Caco-2 (cell line): ENCODE measurements at regions of chr3 and their contacts with region 1.

Region 1: DNA sequence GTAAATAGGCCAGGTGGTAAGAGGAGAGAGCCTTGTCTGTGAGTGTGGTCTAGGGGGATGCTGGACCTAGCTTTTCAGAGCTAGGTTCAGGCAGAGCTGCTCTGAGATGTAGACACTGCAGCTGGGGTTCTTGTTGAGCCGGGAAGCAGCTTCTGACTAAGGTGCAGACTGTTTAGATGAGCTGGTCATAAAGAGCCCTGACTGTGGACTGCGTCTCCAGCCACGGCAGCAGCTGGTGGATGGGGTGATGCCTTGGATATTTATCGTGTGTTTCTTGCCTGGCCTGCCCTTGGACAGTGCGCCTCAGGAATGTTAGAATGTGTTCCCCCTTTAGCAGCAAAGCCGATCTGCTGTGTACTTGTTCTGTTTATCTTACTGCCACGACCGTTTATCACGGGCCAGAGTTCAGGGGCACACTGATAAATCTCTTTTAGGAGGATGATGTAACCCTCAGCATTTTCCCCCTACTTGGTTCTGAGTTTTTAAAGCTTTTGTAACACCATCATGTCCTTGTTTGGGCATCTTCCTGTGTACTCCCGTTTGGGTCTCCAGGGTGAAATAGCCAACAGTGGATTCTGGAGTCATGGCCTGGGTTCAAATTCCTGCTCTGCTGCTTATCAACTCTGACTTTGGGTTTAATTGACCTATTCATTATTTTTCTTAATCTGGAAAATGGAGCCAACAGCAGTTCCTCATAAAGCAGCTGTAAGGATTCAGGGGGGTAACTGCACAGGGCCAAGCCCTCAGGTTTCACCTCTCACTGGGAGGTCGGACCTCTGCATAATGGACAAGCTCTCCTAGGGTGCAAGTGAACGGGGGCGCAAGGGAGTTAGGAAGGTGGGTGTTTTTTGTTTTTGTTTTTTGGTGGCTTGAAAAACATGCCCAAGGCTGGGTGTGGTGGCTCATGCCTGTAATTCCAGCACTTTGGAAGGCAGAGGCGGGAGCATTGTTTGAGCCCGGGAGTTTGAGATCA is 51.4 kb downstream of the FLNB start:
- DNase-seq: peak; percentile 86 to 94
- H3K4me3 ChIP-seq: no peak overlapping the region
- H3K4me3 Mint-ChIP-seq: peak overlapping the region; percentile 62
- H3K27ac Mint-ChIP-seq: peak overlapping the region; percentile 98
- H3K4me1 ChIP-seq: peaks cover 78% of the 10 kb centered on the region
- H3K4me1 Mint-ChIP-seq: peaks cover 36% of the 10 kb centered on the region
- H3K27me3 ChIP-seq: no peaks in the 10 kb centered on the region
- H3K27me3 Mint-ChIP-seq: no peaks in the 10 kb centered on the region
- CTCF ChIP-seq: no peak

Region 2: DNA sequence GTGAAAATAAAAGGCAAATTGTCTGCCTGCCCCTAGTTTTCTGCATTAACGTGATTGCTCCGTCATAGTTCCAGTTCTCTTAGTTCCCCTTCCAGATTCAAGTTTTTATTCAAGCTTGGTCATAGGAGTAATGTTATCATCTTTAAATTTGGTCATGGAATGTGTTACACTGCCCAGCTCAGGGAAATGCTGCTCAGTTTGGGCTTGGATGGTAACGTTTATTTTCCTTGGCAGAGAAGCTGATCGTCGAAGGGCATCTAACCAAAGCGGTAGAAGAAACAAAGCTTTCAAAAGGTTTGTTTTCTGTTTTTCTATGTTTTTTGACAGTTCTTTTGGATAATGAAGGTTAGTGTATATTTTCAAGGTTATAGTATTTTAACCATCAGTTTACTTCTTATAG is 169.8 kb before region 1 on chr3:
- CTCF ChIA-PET with region 1: no interaction called
- POLR2A ChIA-PET with region 1: no interaction called
- intact Hi-C with region 1: no loop called
- DNase-seq: no peak
- H3K4me3 ChIP-seq: no peak overlapping the region
- H3K4me3 Mint-ChIP-seq: no peak overlapping the region
- H3K27ac Mint-ChIP-seq: no peak overlapping the region
- H3K4me1 ChIP-seq: no peaks in the 10 kb centered on the region
- H3K4me1 Mint-ChIP-seq: no peaks in the 10 kb centered on the region
- H3K27me3 ChIP-seq: no peaks in the 10 kb centered on the region
- H3K27me3 Mint-ChIP-seq: no peaks in the 10 kb centered on the region
- CTCF ChIP-seq: no peak

Region 3: GRCh38 chr3:58008140-58009025 is 51.3 kb before region 1 on chr3 and contains the start of gene FLNB:
- CTCF ChIA-PET with region 1: interaction called, 5 read pairs
- POLR2A ChIA-PET with region 1: no interaction called
- intact Hi-C with region 1: loop called (anchors 2 kb)
- DNase-seq: peak; percentile 77 to 85
- H3K4me3 ChIP-seq: peak within 1 kb of the TSS; percentile 100
- H3K4me3 Mint-ChIP-seq: peak within 1 kb of the TSS; percentile 90
- H3K27ac Mint-ChIP-seq: peak within 1 kb of the TSS; percentile 63
- H3K4me1 ChIP-seq: peaks cover 60% of the 10 kb centered on the region
- H3K4me1 Mint-ChIP-seq: peaks cover 23% of the 10 kb centered on the region
- H3K27me3 ChIP-seq: no peaks in the 10 kb centered on the region
- H3K27me3 Mint-ChIP-seq: no peaks in the 10 kb centered on the region
- CTCF ChIP-seq: peak; percentile 74 to 88
- total RNA-seq, gene FLNB: 315 and 331 TPM in 2 replicates

Region 4: DNA sequence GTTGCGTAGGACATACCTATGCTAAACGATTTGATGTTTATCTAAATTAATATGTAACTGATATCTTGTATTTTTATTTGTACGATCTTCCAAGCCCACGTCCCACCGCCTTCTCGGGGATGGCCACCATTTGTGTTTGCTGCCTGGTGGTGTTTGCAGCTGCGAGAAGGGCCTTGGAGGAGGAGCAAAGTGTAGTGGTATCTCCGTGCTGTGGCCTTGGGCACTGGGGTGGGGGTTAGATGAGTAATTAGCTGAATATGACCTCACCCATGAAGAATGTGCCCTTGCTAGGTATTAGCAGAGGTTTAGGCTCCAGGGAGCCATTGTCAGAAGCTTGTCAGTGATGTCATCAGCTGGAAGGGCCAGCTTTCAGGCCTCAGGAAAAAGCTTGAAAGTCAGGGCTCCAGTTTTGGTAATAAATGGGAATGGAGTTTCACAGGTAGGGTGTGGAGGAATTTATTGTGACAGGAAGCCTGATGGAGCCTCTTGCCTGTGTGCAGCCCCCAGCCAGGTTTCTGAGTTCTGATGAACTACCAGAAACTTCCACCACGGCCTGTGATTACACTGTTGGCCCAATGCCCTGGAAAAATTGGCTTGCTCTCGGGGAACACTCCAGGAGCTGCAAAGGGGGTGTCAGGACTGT is 10.4 kb before region 1 on chr3:
- CTCF ChIA-PET with region 1: no interaction called
- POLR2A ChIA-PET with region 1: interaction called, 17 read pairs
- intact Hi-C with region 1: loop called (anchors 1 kb)
- DNase-seq: peak; percentile 92 to 94
- H3K4me3 ChIP-seq: no peak overlapping the region
- H3K4me3 Mint-ChIP-seq: peak overlapping the region; percentile 59
- H3K27ac Mint-ChIP-seq: peak overlapping the region; percentile 98
- H3K4me1 ChIP-seq: peaks cover 78% of the 10 kb centered on the region
- H3K4me1 Mint-ChIP-seq: peaks cover 47% of the 10 kb centered on the region
- H3K27me3 ChIP-seq: no peaks in the 10 kb centered on the region
- H3K27me3 Mint-ChIP-seq: no peaks in the 10 kb centered on the region
- CTCF ChIP-seq: no peak

Region 5: DNA sequence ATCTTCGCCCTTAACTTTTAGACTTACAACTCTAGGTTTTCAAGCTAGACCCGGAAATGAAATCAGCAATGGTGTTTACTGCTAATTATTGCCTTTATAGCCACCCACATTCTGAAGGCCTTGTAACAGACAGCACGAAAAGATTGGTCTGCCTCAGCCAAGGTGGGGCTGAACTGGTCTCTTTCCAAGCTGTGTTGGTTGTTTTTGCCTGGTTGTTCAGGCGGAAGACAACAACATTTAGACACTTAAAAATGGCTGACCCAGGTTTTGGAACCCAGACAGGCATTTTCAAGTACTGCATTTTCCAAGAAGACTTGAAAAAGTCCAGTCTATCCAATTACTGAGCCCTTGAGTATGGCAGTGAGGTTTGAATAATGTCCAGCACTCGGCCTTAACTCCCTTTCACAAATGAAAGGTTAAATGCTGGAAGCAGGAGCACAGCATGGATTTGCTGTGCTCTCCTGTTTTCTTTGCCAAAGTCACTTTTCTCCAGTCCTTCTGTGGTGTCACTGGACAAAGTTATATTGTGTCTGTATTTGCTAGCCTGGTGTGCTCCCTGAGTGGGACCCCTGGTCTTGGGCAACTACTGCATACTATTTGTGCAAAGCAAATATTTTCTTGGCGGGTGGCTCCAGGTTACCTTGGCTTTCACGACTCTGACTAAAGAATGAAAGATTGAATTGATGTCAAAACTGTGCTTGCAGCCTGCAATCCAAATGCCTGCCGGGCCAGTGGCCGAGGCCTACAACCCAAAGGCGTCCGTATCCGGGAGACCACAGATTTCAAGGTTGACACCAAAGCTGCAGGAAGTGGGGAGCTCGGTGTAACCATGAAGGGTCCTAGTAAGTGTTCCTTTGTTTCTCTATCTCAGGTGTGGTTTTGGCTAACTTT is 42.1 kb after region 1 on chr3:
- CTCF ChIA-PET with region 1: no interaction called
- POLR2A ChIA-PET with region 1: no interaction called
- intact Hi-C with region 1: loop called (anchors 1 kb)
- DNase-seq: peak in 1 of 2 experiments; percentile 63
- H3K4me3 ChIP-seq: no peak overlapping the region
- H3K4me3 Mint-ChIP-seq: peak overlapping the region; percentile 15
- H3K27ac Mint-ChIP-seq: peak overlapping the region; percentile 74
- H3K4me1 ChIP-seq: peaks cover 21% of the 10 kb centered on the region; the same call in 1 of the 2 replicates
- H3K4me1 Mint-ChIP-seq: peaks cover 21% of the 10 kb centered on the region
- H3K27me3 ChIP-seq: no peaks in the 10 kb centered on the region
- H3K27me3 Mint-ChIP-seq: no peaks in the 10 kb centered on the region
- CTCF ChIP-seq: no peak

Region 6: GRCh38 chr3:58167431-58168351 is 108.1 kb after region 1 on chr3:
- CTCF ChIA-PET with region 1: no interaction called
- POLR2A ChIA-PET with region 1: interaction called, 10 read pairs
- intact Hi-C with region 1: no loop called
- DNase-seq: peak; percentile 65 to 78
- H3K4me3 ChIP-seq: no peak overlapping the region
- H3K4me3 Mint-ChIP-seq: no peak overlapping the region
- H3K27ac Mint-ChIP-seq: peak overlapping the region; percentile 68
- H3K4me1 ChIP-seq: peaks cover 52% of the 10 kb centered on the region
- H3K4me1 Mint-ChIP-seq: peaks cover 48% of the 10 kb centered on the region
- H3K27me3 ChIP-seq: no peaks in the 10 kb centered on the region
- H3K27me3 Mint-ChIP-seq: no peaks in the 10 kb centered on the region
- CTCF ChIP-seq: peak; percentile 75 to 76